Esophagus muscularis mucosa (tissue), 4 donors: ENCODE measurements at regions of chr14 and their contacts with region 1.

Region 1: GRCh38 chr14:90970167-90970600 is 90.3 kb downstream of the RPS6KA5 start:
- DNase-seq: no peak
- H3K4me3 ChIP-seq: no peak overlapping the region
- H3K27ac ChIP-seq: no peak overlapping the region
- H3K4me1 ChIP-seq: peaks cover 0 to 35% (median 24%) of the 10 kb centered on the region in 4 donors
- H3K27me3 ChIP-seq: no peaks in the 10 kb centered on the region
- CTCF ChIP-seq: no peak
- EP300 ChIP-seq: no peak
- POLR2A ChIP-seq: no peak

Region 2: DNA sequence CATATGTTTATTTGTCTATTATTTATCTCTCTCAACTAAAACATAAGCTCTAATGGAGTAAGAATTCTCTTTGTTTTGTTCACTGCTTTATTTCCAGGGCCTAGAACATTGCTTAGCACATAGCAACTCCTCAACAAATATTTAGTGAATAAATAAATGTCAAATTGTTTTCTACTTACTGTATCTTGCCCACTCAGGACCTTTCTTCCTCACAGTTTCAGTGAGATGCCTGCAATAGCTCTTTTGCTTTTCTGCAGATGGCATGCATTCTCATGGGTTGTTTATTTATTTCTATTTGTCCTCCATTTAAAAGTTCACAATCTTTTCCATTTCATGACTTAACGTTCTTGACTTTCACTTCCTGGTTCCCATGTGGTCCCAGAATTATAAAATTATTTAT is 59.1 kb before region 1 on chr14:
- intact Hi-C with region 1: loop called (anchors 10 kb)
- DNase-seq: no peak
- H3K4me3 ChIP-seq: no peak overlapping the region
- H3K27ac ChIP-seq: no peak overlapping the region
- H3K4me1 ChIP-seq: peaks cover 0 to 13% (median 6%) of the 10 kb centered on the region in 4 donors
- H3K27me3 ChIP-seq: no peaks in the 10 kb centered on the region
- CTCF ChIP-seq: no peak
- EP300 ChIP-seq: no peak
- POLR2A ChIP-seq: no peak

Region 3: DNA sequence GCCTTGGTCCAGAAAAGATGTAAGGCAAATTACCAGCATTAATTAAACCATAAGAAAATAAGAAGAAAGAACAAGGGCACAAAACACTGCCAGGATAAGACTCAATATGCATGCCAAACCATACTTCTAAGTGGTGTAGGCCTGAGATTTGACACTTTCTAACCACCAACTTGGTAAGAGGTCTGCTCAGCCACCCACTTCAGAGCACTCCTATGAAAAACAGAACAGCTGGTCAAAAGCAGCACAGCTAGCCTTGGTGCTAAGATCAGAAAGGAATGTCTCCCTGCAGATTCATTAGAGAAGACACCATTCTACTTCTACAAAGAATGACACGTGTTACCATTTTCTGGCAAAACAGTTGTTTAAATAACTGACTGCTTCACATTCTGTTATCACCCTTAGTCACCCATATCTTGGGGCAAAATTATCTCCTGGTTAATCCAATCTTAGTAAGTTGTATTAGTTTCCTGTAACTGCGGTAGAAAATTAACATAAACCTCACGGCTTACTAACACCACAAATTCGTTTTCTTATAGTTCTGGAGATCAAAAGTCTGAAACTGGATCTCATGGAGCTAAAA is 77.1 kb after region 1 on chr14:
- intact Hi-C with region 1: no loop called
- DNase-seq: no peak
- H3K4me3 ChIP-seq: no peak overlapping the region
- H3K27ac ChIP-seq: peak overlapping the region in 1 of 4 donors; percentile 14
- H3K4me1 ChIP-seq: peaks cover 1 to 63% (median 52%) of the 10 kb centered on the region in 4 donors
- H3K27me3 ChIP-seq: no peaks in the 10 kb centered on the region
- CTCF ChIP-seq: no peak
- EP300 ChIP-seq: no peak
- POLR2A ChIP-seq: no peak